ENCODE measurements at regions of chrX and their contacts with region 1.

Region 1: GRCh38 chrX:130339408-130340222 is at the start of gene SLC25A14:
- DNase-seq: peak; percentile 46 to 63
- H3K4me3 ChIP-seq: peak within 1 kb of the TSS; percentile 54 to 79 (median 74)
- H3K27ac ChIP-seq: peak within 1 kb of the TSS; percentile 43 to 83
- H3K4me1 ChIP-seq: no peaks in the 10 kb centered on the region
- H3K27me3 ChIP-seq: peaks cover 0 to 17% of the 10 kb centered on the region in 2 donors
- CTCF ChIP-seq: no peak
- POLR2A ChIP-seq: no peak
- total RNA-seq, gene SLC25A14: 8.2 to 18.4 (median 16.1) TPM

Region 2: DNA sequence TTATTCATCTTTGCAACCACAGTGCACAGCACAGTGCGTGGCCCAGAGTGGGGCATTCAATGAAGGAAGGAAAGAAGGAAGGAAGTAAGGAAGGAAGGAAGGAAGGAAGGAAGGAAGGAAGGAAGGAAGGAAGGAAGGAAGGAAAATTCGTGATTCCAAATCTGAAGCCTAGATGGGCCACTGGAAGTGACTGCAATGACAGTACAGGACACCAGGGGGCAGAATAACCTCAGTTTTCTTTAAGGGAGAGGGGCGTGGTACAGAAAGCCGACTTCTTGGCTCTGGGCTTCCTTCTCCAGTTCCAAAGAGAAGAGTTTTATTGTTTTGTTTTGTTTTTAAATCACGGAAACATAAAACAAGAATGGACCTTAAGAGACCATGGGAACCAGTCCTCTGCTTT is 732.7 kb before region 1 on chrX:
- intact Hi-C with region 1: loop called (anchors 5 kb)
- DNase-seq: peak in 1 of 2 donors; percentile 30
- H3K4me3 ChIP-seq: no peak overlapping the region
- H3K27ac ChIP-seq: no peak overlapping the region
- H3K4me1 ChIP-seq: no peaks in the 10 kb centered on the region
- H3K27me3 ChIP-seq: peaks cover 0 to 17% of the 10 kb centered on the region in 2 donors
- CTCF ChIP-seq: peak; percentile 74 to 89 (median 88)
- POLR2A ChIP-seq: no peak

Measured in breast epithelium (tissue), 4 donors.